ENCODE measurements at regions of chr10 and their contacts with region 1.

Region 1: DNA sequence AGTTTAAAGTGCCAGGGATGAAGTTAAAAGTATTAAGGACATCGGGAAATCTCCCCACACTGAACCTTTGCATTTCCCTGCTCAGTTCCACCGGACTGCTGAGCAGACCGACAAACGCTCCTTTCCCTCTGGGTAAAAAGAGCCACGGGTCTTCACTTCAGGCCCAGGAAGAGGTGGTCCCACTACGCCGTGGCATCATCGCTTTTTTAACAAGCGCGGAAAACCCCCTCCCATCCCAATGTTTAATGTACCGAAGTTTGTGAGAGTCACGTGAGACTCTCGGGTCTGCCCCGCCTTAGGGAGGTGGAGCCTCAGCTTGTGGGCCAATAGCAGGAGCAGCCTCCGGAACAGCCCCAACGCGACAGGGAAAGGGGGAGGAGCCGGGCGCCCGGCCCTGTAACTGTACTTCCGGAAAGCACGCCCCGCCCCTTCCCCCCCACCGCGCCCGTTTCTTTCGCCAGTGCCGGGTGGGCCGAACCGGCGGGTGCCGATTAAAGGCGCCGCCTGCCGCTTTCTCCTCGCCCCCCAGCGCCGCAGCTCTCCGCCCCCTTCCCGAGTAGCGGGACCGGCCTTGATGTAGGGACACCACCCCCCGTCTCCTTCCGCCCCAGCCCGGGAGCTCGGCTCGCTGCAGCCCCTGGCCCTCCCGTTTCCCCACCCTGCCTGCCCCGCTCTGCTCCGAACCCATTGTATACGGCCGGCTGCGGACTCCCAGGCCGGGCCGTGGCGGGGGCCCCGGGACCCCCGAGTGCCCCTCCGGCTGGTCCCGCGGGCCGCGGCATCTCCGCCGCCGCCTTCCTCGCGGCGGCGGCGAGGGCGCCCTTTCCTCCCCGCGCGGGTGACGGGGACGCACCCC is 2.2 kb upstream of the TRIM8 start:
- DNase-seq: peak; percentile 85 to 99 (median 93)
- ATAC-seq: peak; percentile 84
- H3K4me3 ChIP-seq: peak overlapping the region; percentile 85
- H3K4me3 Mint-ChIP-seq: peak overlapping the region; percentile 90 to 97 (median 93)
- H3K27ac ChIP-seq: peak overlapping the region; percentile 98
- H3K27ac Mint-ChIP-seq: peak overlapping the region; percentile 84 to 98 (median 95)
- H3K4me1 ChIP-seq: peaks cover 8 to 13% of the 10 kb centered on the region in 2 donors
- H3K4me1 Mint-ChIP-seq: peaks cover 13 to 29% (median 19%) of the 10 kb centered on the region in 7 donors
- H3K27me3 ChIP-seq: no peaks in the 10 kb centered on the region
- H3K27me3 Mint-ChIP-seq: peaks cover 0 to 6% (median 0%) of the 10 kb centered on the region in 5 donors

Region 2: GRCh38 chr10:102114861-102115618 is 527.1 kb before region 1 on chr10:
- CTCF ChIA-PET with region 1: no interaction called
- POLR2A ChIA-PET with region 1: interaction called, 5 read pairs
- intact Hi-C with region 1: loop called (anchors 1 to 5 kb)
- DNase-seq: peak; percentile 61 to 83 (median 70)
- ATAC-seq: peak; percentile 86
- H3K4me3 ChIP-seq: peak overlapping the region; percentile 77
- H3K4me3 Mint-ChIP-seq: peak overlapping the region; percentile 84 to 97 (median 92)
- H3K27ac ChIP-seq: peak overlapping the region; percentile 97
- H3K27ac Mint-ChIP-seq: peak overlapping the region; percentile 80 to 98 (median 92)
- H3K4me1 ChIP-seq: peaks cover 49 to 58% of the 10 kb centered on the region in 2 donors
- H3K4me1 Mint-ChIP-seq: peaks cover 54 to 76% (median 67%) of the 10 kb centered on the region in 7 donors
- H3K27me3 ChIP-seq: no peaks in the 10 kb centered on the region
- H3K27me3 Mint-ChIP-seq: no peaks in the 10 kb centered on the region

Region 3: GRCh38 chr10:102245101-102245931 is 396.8 kb before region 1 on chr10 and contains the start of gene GBF1:
- CTCF ChIA-PET with region 1: no interaction called
- POLR2A ChIA-PET with region 1: interaction called, 3 read pairs
- intact Hi-C with region 1: loop called in 1 of 2 experiments (anchors 10 kb)
- DNase-seq: peak; percentile 69 to 97 (median 96)
- ATAC-seq: peak; percentile 92
- H3K4me3 ChIP-seq: peak within 1 kb of the TSS; percentile 84
- H3K4me3 Mint-ChIP-seq: peak within 1 kb of the TSS; percentile 83 to 100 (median 97)
- H3K27ac ChIP-seq: peak within 1 kb of the TSS; percentile 90
- H3K27ac Mint-ChIP-seq: peak within 1 kb of the TSS; percentile 65 to 98 (median 95)
- H3K4me1 ChIP-seq: peaks cover 17 to 37% of the 10 kb centered on the region in 2 donors
- H3K4me1 Mint-ChIP-seq: peaks cover 43 to 69% (median 54%) of the 10 kb centered on the region in 7 donors
- H3K27me3 ChIP-seq: peaks cover 0 to 16% of the 10 kb centered on the region in 2 donors
- H3K27me3 Mint-ChIP-seq: peaks cover 14 to 27% (median 22%) of the 10 kb centered on the region in 5 donors
- total RNA-seq, gene GBF1: 36.2 to 47.2 (median 37.8) TPM

Region 4: DNA sequence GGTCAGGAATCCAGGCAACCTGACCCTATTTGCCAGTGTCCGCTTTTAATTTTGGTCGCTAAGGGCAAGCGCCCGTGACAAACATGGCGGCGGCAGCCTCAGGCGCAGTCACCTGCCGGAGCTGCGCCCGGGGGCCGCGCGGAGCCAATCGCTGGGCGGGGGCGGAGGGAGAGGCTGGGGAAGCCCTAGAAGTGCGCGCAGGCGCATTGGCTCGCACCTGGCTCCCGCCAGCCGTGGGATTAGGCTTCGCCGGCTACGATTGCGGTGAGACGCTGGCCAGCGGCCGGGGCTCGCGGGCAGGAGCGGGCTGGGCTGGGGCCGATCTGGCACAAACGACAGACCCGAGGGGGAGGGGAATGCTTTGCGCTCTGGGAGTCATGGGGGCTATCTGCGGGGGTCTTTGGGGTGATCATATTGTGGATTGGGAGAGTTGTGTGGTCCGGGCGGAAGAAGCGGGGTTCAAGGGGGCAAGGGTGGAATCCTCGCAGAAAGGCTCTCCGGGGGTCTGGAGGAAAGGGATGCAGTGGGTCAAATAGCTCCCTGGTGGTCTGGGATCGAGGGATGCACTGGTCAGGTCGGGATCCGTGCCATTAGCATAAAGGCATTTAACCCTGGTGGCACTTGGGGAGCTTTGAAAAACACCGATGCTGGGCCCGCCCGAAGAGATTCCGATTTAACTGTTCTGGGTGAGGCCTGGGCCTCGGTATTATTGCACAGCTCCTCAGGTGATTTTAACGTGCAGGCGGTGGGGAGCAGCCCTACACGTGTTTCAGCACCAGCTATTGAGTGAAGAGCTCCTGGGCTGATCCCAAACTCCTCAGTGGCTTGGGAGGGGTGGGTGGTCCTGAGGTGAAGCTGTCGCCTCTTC is 180.7 kb before region 1 on chr10:
- CTCF ChIA-PET with region 1: no interaction called
- POLR2A ChIA-PET with region 1: no interaction called
- intact Hi-C with region 1: loop called in 1 of 2 experiments (anchors 1 kb)
- DNase-seq: peak; percentile 84 to 95 (median 90)
- ATAC-seq: peak; percentile 99
- H3K4me3 ChIP-seq: peak overlapping the region; percentile 93
- H3K4me3 Mint-ChIP-seq: peak overlapping the region; percentile 83 to 96 (median 92)
- H3K27ac ChIP-seq: peak overlapping the region; percentile 74
- H3K27ac Mint-ChIP-seq: peak overlapping the region; percentile 72 to 90 (median 85)
- H3K4me1 ChIP-seq: peaks cover 9 to 14% of the 10 kb centered on the region in 2 donors
- H3K4me1 Mint-ChIP-seq: peaks cover 19 to 40% (median 34%) of the 10 kb centered on the region in 7 donors
- H3K27me3 ChIP-seq: no peaks in the 10 kb centered on the region
- H3K27me3 Mint-ChIP-seq: peaks cover 0 to 2% (median 0%) of the 10 kb centered on the region in 5 donors

Region 5: GRCh38 chr10:102604379-102604960 is 37.6 kb before region 1 on chr10:
- CTCF ChIA-PET with region 1: no interaction called
- POLR2A ChIA-PET with region 1: no interaction called
- intact Hi-C with region 1: no loop called
- DNase-seq: no peak
- ATAC-seq: no peak
- H3K4me3 ChIP-seq: no peak overlapping the region
- H3K4me3 Mint-ChIP-seq: no peak overlapping the region
- H3K27ac ChIP-seq: no peak overlapping the region
- H3K27ac Mint-ChIP-seq: no peak overlapping the region
- H3K4me1 ChIP-seq: no peaks in the 10 kb centered on the region
- H3K4me1 Mint-ChIP-seq: peaks cover 0 to 8% (median 3%) of the 10 kb centered on the region in 7 donors
- H3K27me3 ChIP-seq: no peaks in the 10 kb centered on the region
- H3K27me3 Mint-ChIP-seq: no peaks in the 10 kb centered on the region

Region 6: GRCh38 chr10:102713814-102714620 is 71.9 kb after region 1 on chr10 and contains the start of gene ARL3:
- CTCF ChIA-PET with region 1: interaction called, 16 read pairs
- POLR2A ChIA-PET with region 1: interaction called, 83 read pairs
- intact Hi-C with region 1: loop called (anchors 1 kb)
- DNase-seq: peak; percentile 75 to 95 (median 89)
- ATAC-seq: peak; percentile 96
- H3K4me3 ChIP-seq: peak within 1 kb of the TSS; percentile 98
- H3K4me3 Mint-ChIP-seq: peak within 1 kb of the TSS; percentile 86 to 98 (median 94)
- H3K27ac ChIP-seq: peak within 1 kb of the TSS; percentile 92
- H3K27ac Mint-ChIP-seq: peak within 1 kb of the TSS; percentile 66 to 95 (median 90)
- H3K4me1 ChIP-seq: peaks cover 4 to 18% of the 10 kb centered on the region in 2 donors
- H3K4me1 Mint-ChIP-seq: peaks cover 26 to 52% (median 43%) of the 10 kb centered on the region in 7 donors
- H3K27me3 ChIP-seq: no peaks in the 10 kb centered on the region
- H3K27me3 Mint-ChIP-seq: no peaks in the 10 kb centered on the region
- total RNA-seq, gene ARL3: 1.3 to 5.1 (median 2.9) TPM

Region 7: GRCh38 chr10:102917962-102918816 is 276.1 kb after region 1 on chr10 and contains the start of gene CNNM2:
- CTCF ChIA-PET with region 1: no interaction called
- POLR2A ChIA-PET with region 1: interaction called, 3 read pairs
- intact Hi-C with region 1: loop called in 1 of 2 experiments (anchors 1 kb)
- DNase-seq: peak; percentile 95 to 100 (median 99)
- ATAC-seq: peak; percentile 95
- H3K4me3 ChIP-seq: peak within 1 kb of the TSS; percentile 98
- H3K4me3 Mint-ChIP-seq: peak within 1 kb of the TSS; percentile 94 to 99 (median 96)
- H3K27ac ChIP-seq: peak within 1 kb of the TSS; percentile 83
- H3K27ac Mint-ChIP-seq: peak within 1 kb of the TSS; percentile 82 to 97 (median 94)
- H3K4me1 ChIP-seq: peaks cover 34 to 35% of the 10 kb centered on the region in 2 donors
- H3K4me1 Mint-ChIP-seq: peaks cover 41 to 68% (median 56%) of the 10 kb centered on the region in 7 donors
- H3K27me3 ChIP-seq: no peaks in the 10 kb centered on the region
- H3K27me3 Mint-ChIP-seq: peaks cover 0 to 14% (median 5%) of the 10 kb centered on the region in 5 donors
- total RNA-seq, gene CNNM2: 9.3 to 17.5 (median 12.0) TPM

Region 8: GRCh38 chr10:103918053-103918846 is 1276.1 kb after region 1 on chr10 and contains the start of gene STN1:
- CTCF ChIA-PET with region 1: no interaction called
- POLR2A ChIA-PET with region 1: no interaction called
- intact Hi-C with region 1: loop called (anchors 5 to 10 kb)
- DNase-seq: peak; percentile 81 to 95 (median 94)
- ATAC-seq: peak; percentile 97
- H3K4me3 ChIP-seq: peak within 1 kb of the TSS; percentile 89
- H3K4me3 Mint-ChIP-seq: peak within 1 kb of the TSS; percentile 88 to 99 (median 97)
- H3K27ac ChIP-seq: peak within 1 kb of the TSS; percentile 79
- H3K27ac Mint-ChIP-seq: peak within 1 kb of the TSS; percentile 95 to 99 (median 97)
- H3K4me1 ChIP-seq: peaks cover 28 to 31% of the 10 kb centered on the region in 2 donors
- H3K4me1 Mint-ChIP-seq: peaks cover 15 to 44% (median 38%) of the 10 kb centered on the region in 7 donors
- H3K27me3 ChIP-seq: no peaks in the 10 kb centered on the region
- H3K27me3 Mint-ChIP-seq: no peaks in the 10 kb centered on the region
- total RNA-seq, gene STN1: 28.8 to 42.6 (median 34.8) TPM

Region 9: GRCh38 chr10:104016661-104017060 is 1374.6 kb after region 1 on chr10:
- CTCF ChIA-PET with region 1: no interaction called
- POLR2A ChIA-PET with region 1: no interaction called
- intact Hi-C with region 1: no loop called
- DNase-seq: no peak
- ATAC-seq: no peak
- H3K4me3 ChIP-seq: no peak overlapping the region
- H3K4me3 Mint-ChIP-seq: no peak overlapping the region
- H3K27ac ChIP-seq: no peak overlapping the region
- H3K27ac Mint-ChIP-seq: peak overlapping the region in 1 of 9 donors; percentile 41
- H3K4me1 ChIP-seq: no peaks in the 10 kb centered on the region
- H3K4me1 Mint-ChIP-seq: peaks cover 0 to 2% (median 0%) of the 10 kb centered on the region in 7 donors
- H3K27me3 ChIP-seq: no peaks in the 10 kb centered on the region
- H3K27me3 Mint-ChIP-seq: no peaks in the 10 kb centered on the region